ENCODE measurements at regions of chr6 and their contacts with region 1.

Region 1: DNA sequence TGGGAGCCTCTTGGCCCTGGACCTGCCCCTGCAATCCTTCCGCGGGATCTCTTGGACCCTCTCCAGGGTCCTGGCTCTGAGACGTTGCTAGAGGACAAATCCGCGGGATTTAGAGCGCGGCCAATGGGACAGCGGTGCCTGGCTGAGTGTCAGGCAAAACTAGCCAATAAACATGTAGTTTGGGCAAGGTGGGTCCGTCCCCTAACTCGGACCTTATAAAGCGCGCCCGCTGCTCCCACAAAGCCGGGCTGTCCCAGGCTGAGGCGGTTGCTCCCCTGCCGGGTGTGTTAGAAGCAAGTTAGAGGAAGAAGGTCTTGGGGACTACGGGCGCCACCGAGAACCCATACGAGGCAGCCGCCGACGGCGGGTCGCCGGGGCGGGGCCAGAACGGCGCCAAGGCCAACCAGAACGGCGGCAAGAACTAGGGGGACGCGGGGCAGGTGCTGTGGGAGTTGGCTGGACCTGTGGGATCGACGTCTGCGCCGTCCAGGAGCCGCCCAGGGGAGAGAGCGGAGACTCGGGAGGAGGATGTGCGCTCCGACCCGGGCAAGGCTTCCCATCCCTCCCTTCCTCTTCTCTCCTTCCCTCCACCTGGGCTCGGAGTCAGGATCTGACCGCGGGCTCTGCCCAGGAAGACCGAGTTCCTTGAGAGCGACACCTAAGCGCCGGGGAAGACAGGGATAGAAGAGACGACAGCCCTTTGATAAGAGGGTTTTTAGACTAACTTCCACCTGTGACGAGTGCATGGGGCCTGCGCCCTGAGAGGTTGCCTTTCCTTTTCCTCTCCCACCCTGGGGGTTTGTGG is 6.5 kb upstream of the TMEM14A start:
- DNase-seq: peak; percentile 58 to 96
- H3K4me3 ChIP-seq: peak overlapping the region; percentile 80 to 86
- H3K27ac ChIP-seq: peak overlapping the region; percentile 72 to 78
- H3K4me1 ChIP-seq: peaks cover 4 to 12% of the 10 kb centered on the region in 2 donors
- H3K27me3 ChIP-seq: no peaks in the 10 kb centered on the region
- CTCF ChIP-seq: no peak

Region 2: GRCh38 chr6:52284460-52285176 is 379.8 kb before region 1 on chr6 and contains the start of gene MCM3:
- intact Hi-C with region 1: loop called (anchors 2 kb)
- DNase-seq: peak; percentile 96 to 99
- H3K4me3 ChIP-seq: peak within 1 kb of the TSS; percentile 75 to 100
- H3K27ac ChIP-seq: peak within 1 kb of the TSS; percentile 71 to 72
- H3K4me1 ChIP-seq: peaks cover 10 to 11% of the 10 kb centered on the region in 2 donors
- H3K27me3 ChIP-seq: no peaks in the 10 kb centered on the region
- CTCF ChIP-seq: no peak
- total RNA-seq, gene MCM3: 44.6 TPM

Region 3: GRCh38 chr6:52361945-52362442 is 302.4 kb before region 1 on chr6 and contains the start of gene PAQR8:
- intact Hi-C with region 1: loop called (anchors 2 kb)
- DNase-seq: peak; percentile 24 to 83
- H3K4me3 ChIP-seq: peak within 1 kb of the TSS; percentile 87 to 90
- H3K27ac ChIP-seq: peak within 1 kb of the TSS; percentile 36 to 54
- H3K4me1 ChIP-seq: peaks cover 0 to 3% of the 10 kb centered on the region in 2 donors
- H3K27me3 ChIP-seq: no peaks in the 10 kb centered on the region
- CTCF ChIP-seq: peak in 1 of 3 experiments; percentile 1
- total RNA-seq, gene PAQR8: 6.1 TPM

Region 4: GRCh38 chr6:52598123-52598823 is 66.1 kb before region 1 on chr6:
- intact Hi-C with region 1: loop called (anchors 2 kb)
- DNase-seq: peak in 1 of 2 donors; percentile 85
- H3K4me3 ChIP-seq: peak overlapping the region in 1 of 2 donors; percentile 46
- H3K27ac ChIP-seq: peak overlapping the region; percentile 64 to 78
- H3K4me1 ChIP-seq: peaks cover 16 to 33% of the 10 kb centered on the region in 2 donors
- H3K27me3 ChIP-seq: no peaks in the 10 kb centered on the region
- CTCF ChIP-seq: peak; percentile 64 to 79 (median 69)

Region 5: DNA sequence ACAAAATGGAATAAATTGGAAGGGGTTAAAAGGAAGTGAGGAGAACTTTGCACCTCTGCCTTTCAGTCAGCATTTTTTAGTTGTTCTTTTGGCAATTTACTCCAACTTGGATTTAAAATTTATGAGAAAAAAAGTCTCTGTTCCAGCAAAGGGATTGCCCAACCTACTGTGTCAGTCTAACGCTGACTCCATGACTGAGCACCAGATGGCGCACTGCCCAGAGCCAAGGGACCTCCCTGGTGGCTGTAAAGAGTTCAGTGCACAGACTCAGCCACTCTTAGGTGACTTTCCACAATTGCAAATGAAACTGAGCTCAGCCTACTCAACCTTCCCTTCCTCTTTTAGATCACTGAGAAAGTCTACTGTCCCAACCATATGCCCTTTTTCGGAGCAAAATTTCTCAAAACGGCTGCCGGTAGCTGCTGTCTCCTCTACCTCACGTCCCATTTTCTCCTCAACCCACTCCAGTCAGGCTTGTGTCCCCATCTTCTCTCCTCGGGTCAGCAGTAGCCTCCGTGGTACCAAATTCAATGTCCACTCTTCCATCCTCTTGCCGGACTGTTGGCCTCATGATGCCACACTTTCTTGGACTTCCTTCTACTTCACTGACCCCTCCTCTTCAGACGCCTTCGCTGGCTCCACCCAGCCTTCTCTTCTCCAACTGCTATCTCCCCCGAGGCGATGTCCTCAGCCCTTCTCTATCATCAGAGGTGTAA is 60.2 kb after region 1 on chr6:
- intact Hi-C with region 1: loop called (anchors 10 kb)
- DNase-seq: peak; percentile 61 to 89
- H3K4me3 ChIP-seq: no peak overlapping the region
- H3K27ac ChIP-seq: peak overlapping the region; percentile 71 to 91
- H3K4me1 ChIP-seq: peaks cover 2 to 9% of the 10 kb centered on the region in 2 donors
- H3K27me3 ChIP-seq: no peaks in the 10 kb centered on the region
- CTCF ChIP-seq: peak in 2 of 3 experiments; percentile 43 to 48

Region 6: DNA sequence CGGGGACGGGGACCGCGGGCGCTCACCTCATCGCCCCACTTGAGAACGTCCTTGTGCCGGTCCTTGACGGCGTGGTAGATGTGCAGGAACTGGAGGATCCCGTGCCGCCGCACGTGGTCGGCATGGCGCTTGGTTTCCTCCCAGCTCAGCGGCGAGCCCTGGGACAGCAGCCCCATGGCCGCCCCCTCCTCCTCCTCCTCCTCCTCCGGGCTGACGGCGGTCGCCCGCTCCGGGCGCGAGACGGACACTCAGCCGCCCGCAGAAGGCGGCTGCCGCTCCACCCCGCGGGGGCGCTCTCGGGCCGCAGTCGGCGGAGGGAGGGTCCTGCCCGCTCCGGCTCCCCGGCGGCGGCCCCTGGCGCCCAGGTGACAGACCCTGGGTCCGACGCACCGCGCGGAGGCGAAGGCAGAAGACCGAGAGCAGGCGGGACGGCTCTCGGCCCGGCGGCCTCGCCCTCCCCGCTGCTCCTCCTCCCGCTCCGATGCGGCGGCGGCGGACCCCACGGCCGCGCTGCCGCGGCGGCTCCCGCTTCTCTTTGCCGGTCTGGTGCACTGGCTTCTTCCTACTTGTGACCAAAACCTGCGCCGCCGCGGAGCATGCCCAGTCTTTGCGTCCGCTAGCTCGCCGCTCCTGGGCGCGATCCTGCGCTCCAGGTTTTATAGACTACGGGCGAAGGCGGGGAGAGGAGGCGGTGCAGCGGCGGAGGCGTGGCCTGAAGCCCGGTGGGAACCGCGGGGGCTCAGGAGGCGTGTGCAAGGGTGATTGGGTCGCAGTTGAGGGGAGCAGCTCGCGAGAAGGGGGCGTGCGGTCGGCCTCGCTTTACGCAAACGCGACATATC is 880.3 kb after region 1 on chr6 and contains the start of gene GCLC:
- intact Hi-C with region 1: loop called (anchors 2 kb)
- DNase-seq: peak; percentile 79 to 97
- H3K4me3 ChIP-seq: peak within 1 kb of the TSS; percentile 81 to 96
- H3K27ac ChIP-seq: peak within 1 kb of the TSS; percentile 89 to 93
- H3K4me1 ChIP-seq: peaks cover 0 to 14% of the 10 kb centered on the region in 2 donors
- H3K27me3 ChIP-seq: no peaks in the 10 kb centered on the region
- CTCF ChIP-seq: peak in 2 of 3 experiments; percentile 60 to 72
- total RNA-seq, gene GCLC: 54.9 TPM